ENCODE measurements at regions of chrX and their contacts with region 1.

Region 1: GRCh38 chrX:33336783-33337182 is 125.4 kb upstream of the DMD start:
- DNase-seq: peak in 2 of 5 donors; percentile 6 to 19
- ATAC-seq: peak; percentile 49 to 72 (median 60)
- H3K4me3 ChIP-seq: peak overlapping the region in 3 of 12 donors; percentile 16 to 26 (median 24)
- H3K27ac ChIP-seq: no peak overlapping the region
- H3K4me1 ChIP-seq: peaks cover 0 to 3% (median 0%) of the 10 kb centered on the region in 12 donors
- H3K27me3 ChIP-seq: no peaks in the 10 kb centered on the region
- CTCF ChIP-seq: peak; percentile 20 to 56 (median 38)
- POLR2A ChIP-seq: no peak

Region 2: GRCh38 chrX:32530802-32531403 is 805.9 kb before region 1 on chrX:
- intact Hi-C with region 1: loop called in 3 of 10 experiments (anchors 5 to 10 kb)
- DNase-seq: no peak
- ATAC-seq: no peak
- H3K4me3 ChIP-seq: peak overlapping the region in 8 of 12 donors; percentile 7 to 48 (median 30)
- H3K27ac ChIP-seq: no peak overlapping the region
- H3K4me1 ChIP-seq: no peaks in the 10 kb centered on the region
- H3K27me3 ChIP-seq: no peaks in the 10 kb centered on the region
- CTCF ChIP-seq: peak; percentile 20 to 68 (median 46)
- POLR2A ChIP-seq: no peak

Region 3: GRCh38 chrX:33041141-33041540 is 295.6 kb before region 1 on chrX:
- intact Hi-C with region 1: no loop called
- DNase-seq: no peak
- ATAC-seq: no peak
- H3K4me3 ChIP-seq: no peak overlapping the region
- H3K27ac ChIP-seq: no peak overlapping the region
- H3K4me1 ChIP-seq: no peaks in the 10 kb centered on the region
- H3K27me3 ChIP-seq: no peaks in the 10 kb centered on the region
- CTCF ChIP-seq: no peak
- POLR2A ChIP-seq: no peak

Region 4: DNA sequence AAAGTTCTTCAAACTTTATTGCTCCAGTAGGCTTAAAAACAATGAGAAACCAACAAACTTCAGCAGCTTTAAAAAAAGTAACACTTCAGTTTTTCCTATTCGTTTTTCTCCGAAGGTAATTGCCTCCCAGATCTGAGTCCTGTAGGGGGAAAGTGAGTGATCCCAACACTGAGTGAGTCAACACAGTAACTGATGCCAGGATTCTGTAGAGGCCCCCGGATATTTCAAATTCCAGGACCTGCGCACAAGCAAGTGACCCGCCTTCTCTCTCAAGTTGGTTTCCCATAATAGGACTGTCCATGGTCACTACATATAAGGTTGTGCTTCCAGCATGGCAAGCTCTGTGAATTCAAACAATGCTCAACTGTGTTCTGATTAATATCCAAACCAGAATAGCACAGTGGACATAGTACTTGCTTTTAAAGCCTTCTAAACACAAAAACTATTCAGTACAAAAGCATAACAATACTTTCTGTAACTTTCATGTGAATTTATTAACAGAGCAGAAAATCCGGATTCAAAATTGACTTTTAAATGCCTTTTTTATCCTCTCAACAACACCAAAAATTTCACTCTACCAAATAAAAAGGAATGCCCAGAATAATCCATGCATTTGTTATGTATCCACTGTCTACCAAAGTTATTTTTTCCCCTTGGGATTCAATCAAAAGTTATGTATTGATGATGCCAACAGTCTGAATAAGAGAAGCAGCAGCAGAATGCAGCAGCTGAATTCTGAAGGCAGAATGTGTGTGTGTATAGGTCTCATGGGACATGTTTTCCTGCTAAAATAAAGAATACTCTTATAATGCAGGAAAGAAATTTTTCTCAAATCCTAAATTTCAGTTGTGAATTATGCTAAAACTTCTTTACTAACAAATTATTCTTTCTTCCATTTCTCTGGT is 125.2 kb before region 1 on chrX and contains the start of gene DMD:
- intact Hi-C with region 1: loop called in 1 of 10 experiments (anchors 10 kb)
- DNase-seq: peak; percentile 40 to 71 (median 57)
- ATAC-seq: peak; percentile 95 to 98 (median 96)
- H3K4me3 ChIP-seq: peak within 1 kb of the TSS; percentile 11 to 68 (median 48)
- H3K27ac ChIP-seq: peak within 1 kb of the TSS; percentile 48 to 93 (median 77)
- H3K4me1 ChIP-seq: no peaks in the 10 kb centered on the region
- H3K27me3 ChIP-seq: no peaks in the 10 kb centered on the region
- CTCF ChIP-seq: peak in 1 of 12 donors; percentile 10
- POLR2A ChIP-seq: peak; percentile 25 to 39
- total RNA-seq, gene DMD: 127 to 236 (median 169) TPM

Region 5: DNA sequence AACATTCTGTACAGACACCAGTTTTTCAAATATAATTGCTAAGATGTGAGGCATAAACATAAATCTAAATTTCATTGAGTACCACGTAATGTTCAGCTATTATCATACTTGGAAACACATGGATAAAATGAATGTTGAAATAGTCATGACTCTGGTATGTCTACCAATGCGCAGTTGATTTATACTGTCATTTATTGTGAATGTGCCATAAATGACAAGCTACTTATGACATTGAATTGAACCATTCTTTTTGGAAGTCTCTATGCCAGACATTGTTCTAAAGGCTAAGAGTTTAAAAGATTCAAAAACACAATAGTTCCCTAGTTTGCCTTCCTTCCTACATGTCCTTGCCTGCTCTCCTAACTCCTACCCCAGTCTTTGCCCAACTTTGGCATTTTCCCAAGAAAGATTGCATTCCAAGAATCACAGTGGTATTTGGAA is 28.9 kb before region 1 on chrX:
- intact Hi-C with region 1: no loop called
- DNase-seq: no peak
- ATAC-seq: no peak
- H3K4me3 ChIP-seq: no peak overlapping the region
- H3K27ac ChIP-seq: no peak overlapping the region
- H3K4me1 ChIP-seq: no peaks in the 10 kb centered on the region
- H3K27me3 ChIP-seq: no peaks in the 10 kb centered on the region
- CTCF ChIP-seq: no peak
- POLR2A ChIP-seq: no peak

Region 6: DNA sequence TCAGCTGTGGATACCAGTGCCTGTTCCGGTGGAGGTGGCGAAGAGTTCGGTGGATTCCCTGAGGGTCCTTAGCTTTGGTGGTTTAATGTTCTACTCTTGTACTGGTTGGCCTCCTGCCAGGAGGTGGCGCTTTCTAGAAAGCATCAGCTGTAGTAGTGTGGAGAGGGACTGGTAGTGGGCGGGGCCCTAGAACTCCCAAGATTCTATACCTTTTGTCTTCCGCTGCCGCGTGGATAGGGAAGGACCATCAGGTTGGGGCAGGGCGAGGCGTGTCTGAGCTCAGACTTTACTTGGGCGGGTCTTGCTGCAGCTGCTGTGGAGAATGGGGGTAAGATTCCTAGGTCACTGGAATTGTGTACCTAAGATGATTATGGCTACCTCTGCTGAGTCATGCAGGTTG is 405.0 kb after region 1 on chrX:
- intact Hi-C with region 1: no loop called
- DNase-seq: no peak
- ATAC-seq: no peak
- H3K4me3 ChIP-seq: no peak overlapping the region
- H3K27ac ChIP-seq: no peak overlapping the region
- H3K4me1 ChIP-seq: no peaks in the 10 kb centered on the region
- H3K27me3 ChIP-seq: no peaks in the 10 kb centered on the region
- CTCF ChIP-seq: no peak
- POLR2A ChIP-seq: no peak

Measured in heart left ventricle (tissue), 16 donors.